IMR-90 (cell line): ENCODE measurements at regions of chr2 and their contacts with region 1.

Region 1: GRCh38 chr2:182650704-182651103 is 65.4 kb upstream of the DNAJC10 start:
- DNase-seq: peak; percentile 76
- ATAC-seq: peak; percentile 48; the same call in 1 of the 2 replicates
- H3K4me3 ChIP-seq: no peak overlapping the region
- H3K27ac ChIP-seq: no peak overlapping the region
- H3K4me1 ChIP-seq: no peaks in the 10 kb centered on the region
- H3K27me3 ChIP-seq: no peaks in the 10 kb centered on the region
- CTCF ChIP-seq: peak; percentile 62
- POLR2A ChIP-seq: no peak
- RAD21 ChIP-seq: peak; percentile 78

Region 2: GRCh38 chr2:181104512-181105115 is 1546.1 kb before region 1 on chr2:
- CTCF ChIA-PET with region 1: no interaction called
- POLR2A ChIA-PET with region 1: no interaction called
- dilution Hi-C with region 1: no loop called
- in situ Hi-C with region 1: no loop called
- intact Hi-C with region 1: loop called (anchors 10 kb)
- DNase-seq: peak; percentile 76
- ATAC-seq: peak; percentile 50
- H3K4me3 ChIP-seq: no peak overlapping the region
- H3K27ac ChIP-seq: no peak overlapping the region
- H3K4me1 ChIP-seq: peaks cover 5% of the 10 kb centered on the region
- H3K27me3 ChIP-seq: no peaks in the 10 kb centered on the region
- CTCF ChIP-seq: peak; percentile 90
- POLR2A ChIP-seq: no peak
- RAD21 ChIP-seq: peak; percentile 86

Region 3: GRCh38 chr2:181742922-181743722 is 907.6 kb before region 1 on chr2:
- CTCF ChIA-PET with region 1: no interaction called
- POLR2A ChIA-PET with region 1: no interaction called
- dilution Hi-C with region 1: no loop called
- in situ Hi-C with region 1: no loop called
- intact Hi-C with region 1: loop called (anchors 5 kb)
- DNase-seq: peak; percentile 73
- ATAC-seq: peak; percentile 77
- H3K4me3 ChIP-seq: no peak overlapping the region
- H3K27ac ChIP-seq: no peak overlapping the region
- H3K4me1 ChIP-seq: no peaks in the 10 kb centered on the region; the same call in 1 of the 2 replicates
- H3K27me3 ChIP-seq: no peaks in the 10 kb centered on the region
- CTCF ChIP-seq: peak; percentile 77
- POLR2A ChIP-seq: no peak
- RAD21 ChIP-seq: peak; percentile 80

Region 4: DNA sequence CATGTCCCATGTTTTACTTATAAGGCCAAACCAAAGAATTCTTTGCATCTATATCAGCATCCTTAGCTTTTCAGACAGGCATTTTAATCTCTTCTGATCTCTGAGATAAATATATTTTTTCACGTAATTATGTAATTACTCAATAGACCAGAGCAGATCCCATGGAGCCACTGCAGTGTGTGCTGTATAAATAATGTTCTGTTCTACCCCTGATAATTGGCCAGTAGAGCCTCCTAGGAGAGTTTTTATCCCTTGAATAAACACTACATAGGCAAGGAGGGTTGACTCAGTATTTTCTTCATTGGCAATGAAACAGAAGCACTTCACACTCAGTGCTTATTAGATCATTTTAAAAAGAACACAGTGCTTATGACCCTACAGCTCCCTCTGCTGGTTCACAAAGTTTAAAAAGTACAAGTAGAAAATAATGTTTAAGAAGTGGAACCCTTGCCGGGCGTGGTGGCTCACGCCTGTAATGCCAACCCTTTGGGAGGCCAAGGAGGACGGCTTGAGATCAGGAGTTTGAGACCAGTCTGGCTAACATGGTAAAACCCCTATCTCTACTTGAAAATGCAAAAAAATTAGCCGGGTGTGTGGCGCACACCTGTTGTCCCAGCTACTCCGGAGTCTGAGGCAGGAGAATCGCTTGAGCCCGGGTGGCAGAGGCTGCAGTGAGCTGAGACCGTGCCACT is 573.1 kb before region 1 on chr2:
- CTCF ChIA-PET with region 1: no interaction called
- POLR2A ChIA-PET with region 1: no interaction called
- dilution Hi-C with region 1: no loop called
- in situ Hi-C with region 1: no loop called
- intact Hi-C with region 1: loop called (anchors 5 kb)
- DNase-seq: peak; percentile 95
- ATAC-seq: peak; percentile 94
- H3K4me3 ChIP-seq: no peak overlapping the region
- H3K27ac ChIP-seq: peak overlapping the region; percentile 73
- H3K4me1 ChIP-seq: peaks cover 2% of the 10 kb centered on the region; the same call in 1 of the 2 replicates
- H3K27me3 ChIP-seq: no peaks in the 10 kb centered on the region
- CTCF ChIP-seq: peak; percentile 82
- POLR2A ChIP-seq: no peak
- RAD21 ChIP-seq: peak; percentile 87

Region 5: GRCh38 chr2:182240862-182241371 is 409.8 kb before region 1 on chr2:
- CTCF ChIA-PET with region 1: interaction called, 6 read pairs
- POLR2A ChIA-PET with region 1: no interaction called
- dilution Hi-C with region 1: no loop called
- in situ Hi-C with region 1: no loop called
- intact Hi-C with region 1: loop called (anchors 2 kb)
- DNase-seq: peak; percentile 27
- ATAC-seq: no peak
- H3K4me3 ChIP-seq: no peak overlapping the region
- H3K27ac ChIP-seq: no peak overlapping the region
- H3K4me1 ChIP-seq: no peaks in the 10 kb centered on the region
- H3K27me3 ChIP-seq: no peaks in the 10 kb centered on the region
- CTCF ChIP-seq: peak; percentile 34; the same call in 1 of the 2 replicates
- POLR2A ChIP-seq: no peak
- RAD21 ChIP-seq: peak; percentile 42

Region 6: GRCh38 chr2:182359990-182360662 is 290.6 kb before region 1 on chr2:
- CTCF ChIA-PET with region 1: no interaction called
- POLR2A ChIA-PET with region 1: no interaction called
- dilution Hi-C with region 1: no loop called
- in situ Hi-C with region 1: no loop called
- intact Hi-C with region 1: loop called (anchors 5 kb)
- DNase-seq: peak; percentile 79
- ATAC-seq: peak; percentile 74
- H3K4me3 ChIP-seq: no peak overlapping the region
- H3K27ac ChIP-seq: peak overlapping the region; percentile 75; the same call in 1 of the 2 replicates
- H3K4me1 ChIP-seq: peaks cover 4% of the 10 kb centered on the region; the same call in 1 of the 2 replicates
- H3K27me3 ChIP-seq: no peaks in the 10 kb centered on the region
- CTCF ChIP-seq: no peak
- POLR2A ChIP-seq: no peak
- RAD21 ChIP-seq: no peak

Region 7: GRCh38 chr2:182504903-182505302 is 145.8 kb before region 1 on chr2:
- CTCF ChIA-PET with region 1: interaction called, 4 read pairs
- POLR2A ChIA-PET with region 1: no interaction called
- dilution Hi-C with region 1: no loop called
- in situ Hi-C with region 1: no loop called
- intact Hi-C with region 1: loop called (anchors 5 kb)
- DNase-seq: peak; percentile 91
- ATAC-seq: peak; percentile 78
- H3K4me3 ChIP-seq: no peak overlapping the region
- H3K27ac ChIP-seq: no peak overlapping the region
- H3K4me1 ChIP-seq: peaks cover 7% of the 10 kb centered on the region
- H3K27me3 ChIP-seq: no peaks in the 10 kb centered on the region
- CTCF ChIP-seq: no peak
- POLR2A ChIP-seq: no peak
- RAD21 ChIP-seq: peak; percentile 20; the same call in 1 of the 2 replicates